MCF 10A (cell line): ENCODE measurements at regions of chr3 and their contacts with region 1.

Region 1: GRCh38 chr3:94336046-94336710 is 273.3 kb downstream of the NSUN3 start:
- DNase-seq: peak; percentile 55
- H3K4me3 Mint-ChIP-seq: no peak overlapping the region
- H3K27ac Mint-ChIP-seq: no peak overlapping the region
- H3K4me1 Mint-ChIP-seq: no peaks in the 10 kb centered on the region
- H3K27me3 Mint-ChIP-seq: peaks cover 54% of the 10 kb centered on the region
- CTCF ChIP-seq: peak; percentile 72

Region 2: DNA sequence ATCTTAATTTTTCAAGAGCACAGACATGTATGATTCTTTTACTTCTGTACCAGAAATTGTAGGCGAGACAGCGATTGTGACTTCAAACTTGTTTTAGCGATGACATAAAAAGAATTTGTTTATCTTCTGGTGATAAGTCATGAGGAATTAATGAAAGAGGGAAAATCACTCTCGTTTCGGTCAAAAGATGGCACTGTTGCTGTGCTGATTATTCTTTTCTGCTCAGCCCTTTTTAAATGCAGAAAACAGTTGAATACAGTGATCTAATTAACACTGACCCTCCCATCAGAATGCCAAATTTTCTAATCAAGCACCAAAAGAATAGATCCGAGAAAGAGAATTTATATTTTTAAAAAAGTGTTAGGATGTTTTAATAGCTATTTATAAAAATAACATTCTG is 220.7 kb before region 1 on chr3:
- CTCF ChIA-PET with region 1: interaction called, 4 read pairs
- POLR2A ChIA-PET with region 1: no interaction called
- intact Hi-C with region 1: loop called (anchors 1 kb)
- DNase-seq: peak; percentile 44
- H3K4me3 Mint-ChIP-seq: no peak overlapping the region
- H3K27ac Mint-ChIP-seq: no peak overlapping the region
- H3K4me1 Mint-ChIP-seq: no peaks in the 10 kb centered on the region
- H3K27me3 Mint-ChIP-seq: no peaks in the 10 kb centered on the region
- CTCF ChIP-seq: peak; percentile 54

Region 3: DNA sequence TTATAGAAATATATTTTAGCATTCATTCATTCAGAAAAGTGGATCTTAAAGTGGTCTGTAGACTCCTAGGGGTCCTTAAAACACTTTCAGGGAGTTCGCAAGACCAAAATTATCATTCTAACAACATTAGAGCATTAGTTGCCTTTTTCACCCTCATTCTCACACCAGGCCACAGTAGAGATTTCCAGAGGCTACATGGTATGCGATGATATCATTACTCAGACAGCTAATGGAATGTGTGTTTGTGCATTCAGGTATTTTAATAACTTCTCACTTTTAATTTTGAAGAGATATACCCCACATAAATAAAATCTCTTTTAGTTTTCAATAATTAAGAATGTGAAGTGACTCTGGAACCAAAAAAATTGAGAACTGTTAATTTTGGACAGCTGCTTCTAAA is 66.4 kb before region 1 on chr3:
- CTCF ChIA-PET with region 1: no interaction called
- POLR2A ChIA-PET with region 1: no interaction called
- intact Hi-C with region 1: no loop called
- DNase-seq: no peak
- H3K4me3 Mint-ChIP-seq: no peak overlapping the region
- H3K27ac Mint-ChIP-seq: no peak overlapping the region
- H3K4me1 Mint-ChIP-seq: no peaks in the 10 kb centered on the region
- H3K27me3 Mint-ChIP-seq: peaks cover 15% of the 10 kb centered on the region
- CTCF ChIP-seq: no peak

Region 4: DNA sequence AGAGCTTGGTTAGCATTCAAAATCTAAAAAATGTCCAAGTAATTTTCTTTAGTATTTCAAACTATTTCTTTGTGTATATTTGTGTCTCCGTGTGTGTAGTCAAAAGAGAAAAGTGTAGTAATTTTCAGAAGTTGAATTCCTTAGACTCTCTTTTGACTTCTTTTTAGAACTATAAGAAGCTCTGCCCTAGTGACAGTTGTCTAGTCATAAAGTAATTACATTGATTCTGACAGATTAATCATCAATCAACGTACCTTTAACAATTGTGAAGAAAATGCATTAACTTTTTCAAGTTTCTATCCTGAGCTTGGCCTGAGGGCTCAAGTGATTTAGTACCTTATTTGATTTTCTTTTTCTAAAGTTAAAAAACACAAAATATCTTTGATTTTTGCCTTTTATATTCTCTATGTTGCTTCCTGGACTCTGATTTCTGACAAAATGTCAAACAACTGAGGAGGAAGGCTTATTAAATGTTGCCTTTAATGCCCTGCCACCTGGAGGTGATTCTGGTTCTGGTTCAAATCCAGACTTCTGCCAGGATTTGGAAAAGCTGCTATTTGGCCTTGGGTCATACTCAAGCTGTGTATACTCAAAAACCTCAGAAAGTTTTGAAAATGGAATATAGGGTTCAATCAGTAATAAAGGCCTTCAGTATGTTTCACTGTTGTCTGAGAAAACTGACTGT is 380.3 kb after region 1 on chr3:
- CTCF ChIA-PET with region 1: interaction called, 9 read pairs
- POLR2A ChIA-PET with region 1: interaction called, 3 read pairs
- intact Hi-C with region 1: loop called (anchors 1 kb)
- DNase-seq: peak; percentile 40
- H3K4me3 Mint-ChIP-seq: no peak overlapping the region
- H3K27ac Mint-ChIP-seq: no peak overlapping the region
- H3K4me1 Mint-ChIP-seq: no peaks in the 10 kb centered on the region
- H3K27me3 Mint-ChIP-seq: peaks cover 70% of the 10 kb centered on the region
- CTCF ChIP-seq: peak; percentile 10

Region 5: DNA sequence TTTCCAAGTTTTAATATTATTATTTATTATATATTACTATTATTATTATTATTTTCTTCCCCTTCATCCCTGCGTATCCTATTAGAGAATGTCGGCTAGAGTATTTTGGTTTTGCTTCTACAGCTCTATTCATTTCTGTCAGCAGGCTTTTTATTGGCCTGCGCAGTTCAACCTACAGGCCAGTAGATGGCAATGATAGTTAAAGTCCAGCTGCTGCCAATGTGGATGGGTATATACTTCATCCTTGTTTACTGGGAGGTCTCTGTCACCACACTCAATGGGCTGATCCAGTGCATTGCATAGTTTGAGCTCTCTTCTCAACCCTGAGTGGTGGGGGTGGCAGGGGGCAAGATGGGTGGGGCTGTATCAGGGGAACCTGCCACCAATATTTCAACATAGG is 526.5 kb after region 1 on chr3:
- CTCF ChIA-PET with region 1: no interaction called
- POLR2A ChIA-PET with region 1: no interaction called
- intact Hi-C with region 1: loop called (anchors 5 kb)
- DNase-seq: peak; percentile 30
- H3K4me3 Mint-ChIP-seq: no peak overlapping the region
- H3K27ac Mint-ChIP-seq: no peak overlapping the region
- H3K4me1 Mint-ChIP-seq: no peaks in the 10 kb centered on the region
- H3K27me3 Mint-ChIP-seq: no peaks in the 10 kb centered on the region
- CTCF ChIP-seq: peak; percentile 46

Region 6: GRCh38 chr3:96331341-96331740 is 1995.2 kb after region 1 on chr3:
- CTCF ChIA-PET with region 1: no interaction called
- POLR2A ChIA-PET with region 1: no interaction called
- intact Hi-C with region 1: loop called (anchors 5 kb)
- DNase-seq: peak; percentile 45
- H3K4me3 Mint-ChIP-seq: no peak overlapping the region
- H3K27ac Mint-ChIP-seq: no peak overlapping the region
- H3K4me1 Mint-ChIP-seq: no peaks in the 10 kb centered on the region
- H3K27me3 Mint-ChIP-seq: no peaks in the 10 kb centered on the region
- CTCF ChIP-seq: peak; percentile 45